ENCODE measurements at regions of chr2 and their contacts with region 1.

Region 1: GRCh38 chr2:227106845-227107759 is 56.9 kb downstream of the COL4A4 start:
- DNase-seq: no peak
- ATAC-seq: no peak
- H3K4me3 Mint-ChIP-seq: no peak overlapping the region
- H3K27ac Mint-ChIP-seq: no peak overlapping the region
- H3K4me1 Mint-ChIP-seq: no peaks in the 10 kb centered on the region
- H3K27me3 Mint-ChIP-seq: no peaks in the 10 kb centered on the region
- CTCF ChIP-seq: no peak

Region 2: GRCh38 chr2:225282858-225283710 is 1824.0 kb before region 1 on chr2:
- CTCF ChIA-PET with region 1: no interaction called
- POLR2A ChIA-PET with region 1: no interaction called
- intact Hi-C with region 1: loop called (anchors 5 kb)
- DNase-seq: no peak
- ATAC-seq: peak; percentile 61
- H3K4me3 Mint-ChIP-seq: no peak overlapping the region
- H3K27ac Mint-ChIP-seq: no peak overlapping the region
- H3K4me1 Mint-ChIP-seq: no peaks in the 10 kb centered on the region
- H3K27me3 Mint-ChIP-seq: no peaks in the 10 kb centered on the region
- CTCF ChIP-seq: no peak

Region 3: DNA sequence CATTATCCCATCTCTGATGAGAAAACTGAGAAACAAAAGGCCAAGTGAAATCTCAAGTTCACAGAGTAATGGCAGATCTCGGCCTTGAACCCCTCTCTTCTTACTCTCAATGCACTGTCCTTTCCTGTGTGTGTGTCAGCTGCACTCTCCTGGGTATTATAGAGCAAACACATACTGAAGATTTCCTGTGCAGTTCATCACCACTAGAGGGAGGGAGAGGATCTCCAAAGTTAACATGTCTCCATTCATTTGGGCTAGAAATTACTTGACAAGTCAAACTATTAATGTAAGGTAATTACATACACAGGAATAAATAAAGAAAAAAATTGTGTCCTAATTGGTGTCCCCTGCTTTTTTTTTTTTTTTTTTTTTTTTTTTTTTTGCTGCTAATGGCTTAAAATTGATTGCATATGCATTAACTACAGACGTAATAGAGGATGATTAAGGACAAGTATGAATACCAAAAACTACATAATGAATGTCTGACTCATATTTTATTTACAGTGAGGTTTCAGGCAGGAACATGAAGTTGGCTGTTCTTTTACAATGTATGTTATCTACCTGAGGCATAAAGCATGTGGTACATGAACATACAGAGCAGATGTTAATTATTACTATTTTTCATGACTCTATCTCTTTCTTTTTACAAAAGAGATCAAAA is 1438.4 kb before region 1 on chr2:
- CTCF ChIA-PET with region 1: no interaction called
- POLR2A ChIA-PET with region 1: interaction called, 12 read pairs
- intact Hi-C with region 1: loop called (anchors 1 kb)
- DNase-seq: no peak
- ATAC-seq: peak; percentile 79
- H3K4me3 Mint-ChIP-seq: no peak overlapping the region
- H3K27ac Mint-ChIP-seq: no peak overlapping the region
- H3K4me1 Mint-ChIP-seq: no peaks in the 10 kb centered on the region
- H3K27me3 Mint-ChIP-seq: peaks cover 5% of the 10 kb centered on the region
- CTCF ChIP-seq: peak; percentile 29

Region 4: DNA sequence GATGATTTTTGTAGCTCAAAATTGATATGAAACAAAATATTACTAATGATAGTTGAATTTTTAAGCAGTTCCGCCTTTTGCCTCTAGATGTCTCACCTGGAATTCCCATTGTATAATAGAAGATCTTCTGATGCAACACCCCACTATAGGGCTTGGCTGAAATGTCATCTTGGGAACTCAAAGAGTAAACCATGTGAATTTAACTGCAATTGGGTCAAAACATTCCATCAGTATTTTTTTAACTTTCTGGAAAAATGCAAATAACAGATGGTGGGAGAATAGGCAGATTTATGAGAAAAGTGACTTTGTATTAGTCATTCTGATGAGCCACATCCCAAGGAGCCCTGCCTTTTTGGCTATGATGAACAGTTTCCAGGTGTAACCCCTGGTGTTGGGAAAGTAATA is 1217.7 kb before region 1 on chr2:
- CTCF ChIA-PET with region 1: no interaction called
- POLR2A ChIA-PET with region 1: no interaction called
- intact Hi-C with region 1: loop called (anchors 1 kb)
- DNase-seq: no peak
- ATAC-seq: peak; percentile 47
- H3K4me3 Mint-ChIP-seq: no peak overlapping the region
- H3K27ac Mint-ChIP-seq: no peak overlapping the region
- H3K4me1 Mint-ChIP-seq: no peaks in the 10 kb centered on the region
- H3K27me3 Mint-ChIP-seq: peaks cover 4% of the 10 kb centered on the region
- CTCF ChIP-seq: no peak

Region 5: DNA sequence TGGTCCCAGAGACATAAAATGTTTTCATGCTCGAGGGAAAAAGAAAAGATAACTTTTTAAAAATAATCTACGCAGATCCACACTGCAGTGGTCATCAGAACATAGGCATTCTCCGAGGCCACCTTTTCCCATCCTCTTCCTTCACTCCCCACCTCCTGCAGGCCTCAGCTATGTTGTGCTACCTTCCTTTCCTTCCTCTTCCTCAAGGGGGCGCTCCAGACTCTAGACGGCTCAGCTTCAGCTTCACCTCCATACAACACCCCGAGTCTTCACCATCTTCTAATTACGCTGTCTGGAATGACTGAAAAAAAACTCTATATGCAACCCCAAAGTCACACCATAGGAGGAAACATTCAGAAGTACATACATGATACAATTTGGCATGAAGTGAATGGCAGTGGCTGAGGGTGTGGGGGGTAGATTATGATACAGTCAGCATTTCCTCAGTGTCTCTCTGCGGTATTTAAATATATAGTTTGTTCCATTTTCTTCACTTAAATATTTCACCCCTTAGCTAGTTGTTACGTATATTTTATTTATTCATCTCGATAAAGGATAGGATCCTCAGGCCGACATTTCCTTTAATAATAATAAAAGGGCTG is 891.1 kb before region 1 on chr2:
- CTCF ChIA-PET with region 1: no interaction called
- POLR2A ChIA-PET with region 1: no interaction called
- intact Hi-C with region 1: loop called (anchors 5 kb)
- DNase-seq: peak; percentile 15
- ATAC-seq: peak; percentile 69
- H3K4me3 Mint-ChIP-seq: no peak overlapping the region
- H3K27ac Mint-ChIP-seq: no peak overlapping the region
- H3K4me1 Mint-ChIP-seq: no peaks in the 10 kb centered on the region
- H3K27me3 Mint-ChIP-seq: peaks cover 2% of the 10 kb centered on the region
- CTCF ChIP-seq: no peak

Region 6: GRCh38 chr2:227597998-227598397 is 490.9 kb after region 1 on chr2:
- CTCF ChIA-PET with region 1: no interaction called
- POLR2A ChIA-PET with region 1: no interaction called
- intact Hi-C with region 1: no loop called
- DNase-seq: no peak
- ATAC-seq: no peak
- H3K4me3 Mint-ChIP-seq: no peak overlapping the region
- H3K27ac Mint-ChIP-seq: no peak overlapping the region
- H3K4me1 Mint-ChIP-seq: no peaks in the 10 kb centered on the region
- H3K27me3 Mint-ChIP-seq: peaks cover 38% of the 10 kb centered on the region
- CTCF ChIP-seq: no peak

Measured in activated B cell treated with CpG ODN at 0.5 μM for 24 hours (primary cell).